Activated CD8-positive, alpha-beta T cell treated with anti-CD3 and anti-CD28 coated beads, Interleukin-2, amount 10 ng/mL, durations not matched to agents 7 days and 5 days (primary cell): ENCODE measurements at regions of chr20 and their contacts with region 1.

Region 1: DNA sequence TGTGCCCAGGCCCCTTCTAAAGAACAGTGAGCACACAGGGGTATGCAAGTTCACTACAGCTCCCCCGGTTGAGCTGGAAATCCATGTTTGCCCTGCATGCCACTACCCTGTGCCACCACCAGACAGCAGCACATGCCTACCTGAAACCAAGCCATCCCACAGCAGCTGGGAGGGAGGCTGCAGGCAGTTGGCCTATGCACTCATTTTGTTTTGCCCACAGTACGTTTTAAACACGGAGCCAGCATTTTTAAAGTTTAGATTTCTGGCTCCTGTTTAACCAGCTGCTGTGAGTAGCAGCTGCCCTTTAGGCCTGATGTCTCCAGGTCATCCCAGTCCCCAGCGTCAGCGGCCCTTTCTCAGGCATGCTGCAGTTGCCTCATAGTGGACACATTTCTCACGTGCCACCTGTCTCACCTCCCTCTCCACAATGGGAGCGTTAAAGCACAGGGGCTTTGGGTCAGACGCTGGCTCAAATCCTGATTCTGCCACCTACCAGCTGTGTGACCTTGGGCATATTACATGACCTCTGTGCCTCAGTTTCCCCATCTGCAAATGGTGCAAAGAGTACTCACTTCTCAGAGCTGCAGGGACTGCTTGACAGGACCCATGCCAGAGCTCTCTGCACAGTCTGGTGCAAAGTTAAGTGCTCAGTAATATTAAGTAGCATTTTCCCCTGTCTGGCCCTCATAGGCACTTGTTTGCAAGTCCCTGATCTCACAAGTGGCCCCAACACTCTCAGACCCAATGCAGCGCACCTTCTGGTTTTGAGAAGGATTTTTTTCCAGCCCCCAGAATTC is 8.1 kb upstream of the UBE2V1 start:
- DNase-seq: peak; percentile 70
- ATAC-seq: peak; percentile 68
- H3K4me3 Mint-ChIP-seq: no peak overlapping the region
- H3K27ac Mint-ChIP-seq: no peak overlapping the region
- H3K4me1 Mint-ChIP-seq: peaks cover 7% of the 10 kb centered on the region
- H3K27me3 Mint-ChIP-seq: no peaks in the 10 kb centered on the region

Region 2: DNA sequence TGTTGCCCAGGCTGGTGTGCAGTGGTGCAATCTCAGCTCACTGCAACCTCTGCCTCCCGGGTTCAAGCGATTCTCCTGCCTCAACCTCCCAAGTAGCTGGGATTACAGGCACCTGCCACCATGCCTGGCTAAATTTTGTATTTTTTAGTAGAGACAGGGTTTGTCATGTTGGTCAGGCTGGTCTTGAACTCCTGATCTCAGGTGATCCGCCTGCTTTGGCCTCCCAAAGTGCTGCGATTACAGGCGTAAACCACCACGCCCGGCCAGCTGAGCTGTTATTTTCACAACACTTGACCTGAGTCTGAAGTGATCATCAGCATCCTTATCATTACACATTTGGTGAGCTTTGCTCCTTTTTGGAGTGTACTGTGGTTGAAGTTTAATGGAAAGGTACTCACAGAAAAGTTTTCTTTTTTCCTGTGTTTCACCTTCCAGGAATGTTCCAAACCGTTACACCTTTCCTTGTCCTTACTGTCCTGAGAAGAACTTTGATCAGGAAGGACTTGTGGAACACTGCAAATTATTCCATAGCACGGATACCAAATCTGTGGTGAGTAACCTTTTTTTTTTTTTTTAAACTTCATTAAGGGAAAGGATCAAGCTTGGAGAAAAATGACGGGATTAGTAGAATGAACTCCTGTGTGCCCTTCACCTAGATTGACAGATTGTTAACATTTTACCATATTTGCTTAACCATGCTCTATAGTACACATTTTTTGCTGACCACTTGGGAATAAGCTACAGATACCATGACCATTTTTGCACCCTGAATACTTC is 175.2 kb before region 1 on chr20:
- CTCF ChIA-PET with region 1: no interaction called
- POLR2A ChIA-PET with region 1: no interaction called
- DNase-seq: no peak
- ATAC-seq: no peak
- H3K4me3 Mint-ChIP-seq: no peak overlapping the region
- H3K27ac Mint-ChIP-seq: no peak overlapping the region
- H3K4me1 Mint-ChIP-seq: peaks cover 12% of the 10 kb centered on the region
- H3K27me3 Mint-ChIP-seq: no peaks in the 10 kb centered on the region

Region 3: DNA sequence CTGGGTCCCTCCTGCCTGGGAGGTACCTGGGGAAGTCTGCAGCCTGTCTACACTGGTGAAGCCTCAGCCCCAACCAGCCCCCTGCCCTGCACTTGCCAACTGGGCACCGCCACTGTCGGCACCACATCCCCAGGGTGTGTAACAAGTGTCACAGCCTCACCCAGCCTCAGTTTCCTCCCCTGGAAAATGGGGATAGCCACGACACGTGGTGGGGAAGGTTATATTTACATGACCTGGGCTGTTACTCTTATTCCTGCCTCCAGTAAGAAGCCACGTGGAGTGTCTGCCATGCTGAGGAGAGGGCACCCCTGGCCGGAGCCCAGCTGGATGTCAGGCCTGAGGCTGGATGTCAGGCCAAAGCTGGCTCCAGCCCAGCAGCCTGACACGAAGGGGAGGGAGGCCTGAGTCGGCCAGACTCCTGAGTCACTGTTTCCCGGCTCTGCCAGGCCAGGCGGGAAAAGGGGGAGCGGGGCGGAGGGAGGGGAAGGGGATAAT is 93.4 kb before region 1 on chr20:
- CTCF ChIA-PET with region 1: no interaction called
- POLR2A ChIA-PET with region 1: no interaction called
- DNase-seq: no peak
- ATAC-seq: no peak
- H3K4me3 Mint-ChIP-seq: no peak overlapping the region
- H3K27ac Mint-ChIP-seq: no peak overlapping the region
- H3K4me1 Mint-ChIP-seq: no peaks in the 10 kb centered on the region
- H3K27me3 Mint-ChIP-seq: peaks cover 4% of the 10 kb centered on the region

Region 4: GRCh38 chr20:50093240-50093639 is 27.9 kb before region 1 on chr20:
- CTCF ChIA-PET with region 1: no interaction called
- POLR2A ChIA-PET with region 1: no interaction called
- DNase-seq: no peak
- ATAC-seq: no peak
- H3K4me3 Mint-ChIP-seq: no peak overlapping the region
- H3K27ac Mint-ChIP-seq: no peak overlapping the region
- H3K4me1 Mint-ChIP-seq: peaks cover 16% of the 10 kb centered on the region
- H3K27me3 Mint-ChIP-seq: no peaks in the 10 kb centered on the region

Region 5: GRCh38 chr20:50146732-50147662 is 25.9 kb after region 1 on chr20:
- CTCF ChIA-PET with region 1: interaction called, 56 read pairs
- POLR2A ChIA-PET with region 1: interaction called, 22 read pairs
- DNase-seq: peak; percentile 86
- ATAC-seq: peak; percentile 99
- H3K4me3 Mint-ChIP-seq: peak overlapping the region; percentile 78
- H3K27ac Mint-ChIP-seq: peak overlapping the region; percentile 98
- H3K4me1 Mint-ChIP-seq: peaks cover 68% of the 10 kb centered on the region
- H3K27me3 Mint-ChIP-seq: no peaks in the 10 kb centered on the region

Region 6: GRCh38 chr20:50153485-50154377 is 32.6 kb after region 1 on chr20 and contains the start of gene PEDS1:
- CTCF ChIA-PET with region 1: interaction called, 56 read pairs
- POLR2A ChIA-PET with region 1: interaction called, 22 read pairs
- DNase-seq: peak; percentile 87
- ATAC-seq: peak; percentile 99
- H3K4me3 Mint-ChIP-seq: peak within 1 kb of the TSS; percentile 78
- H3K27ac Mint-ChIP-seq: peak within 1 kb of the TSS; percentile 84
- H3K4me1 Mint-ChIP-seq: peaks cover 43% of the 10 kb centered on the region
- H3K27me3 Mint-ChIP-seq: no peaks in the 10 kb centered on the region
- total RNA-seq, gene PEDS1: 28.7 to 30.2 TPM

Region 7: DNA sequence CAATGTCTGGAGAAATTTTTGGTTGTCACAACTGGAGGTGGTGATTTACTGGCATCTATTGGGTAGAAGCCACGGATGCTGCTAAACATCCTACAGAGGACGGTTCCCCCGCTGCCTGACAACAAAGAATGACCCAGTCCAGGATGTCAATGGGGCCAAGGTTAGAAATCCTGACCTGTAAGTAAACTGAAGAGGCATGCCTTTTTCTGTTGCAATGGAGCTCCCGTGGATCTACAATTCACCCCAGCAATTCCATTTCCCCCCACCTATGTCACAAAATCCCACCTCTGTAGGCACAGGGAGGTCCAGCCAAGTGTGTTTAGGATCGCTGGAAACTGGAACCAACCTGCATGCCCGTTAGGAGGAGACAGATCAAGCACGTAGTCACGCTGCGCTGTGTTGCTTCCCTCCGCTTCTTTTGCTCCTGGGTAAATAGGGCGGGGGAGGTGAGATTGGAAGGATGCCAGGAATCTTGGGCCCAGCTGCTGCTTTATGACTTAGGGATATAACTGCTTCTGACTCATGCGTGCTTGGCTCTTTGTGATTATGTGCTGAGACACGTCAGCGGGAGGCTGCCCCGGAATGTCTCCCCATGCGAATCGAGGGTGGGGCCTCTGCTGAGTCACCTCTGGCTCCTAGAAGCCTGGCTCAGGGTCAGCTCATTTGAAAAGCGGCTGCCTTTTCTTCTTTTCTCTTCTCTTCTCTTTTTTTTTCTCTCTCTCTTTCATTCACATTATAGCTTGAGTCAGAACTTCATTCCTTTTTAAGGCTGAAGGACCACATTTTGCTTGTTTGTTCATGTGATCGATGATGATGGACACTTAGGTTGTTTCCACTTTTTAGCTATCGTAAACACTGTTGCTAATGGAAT is 44.8 kb after region 1 on chr20:
- CTCF ChIA-PET with region 1: interaction called, 128 read pairs
- POLR2A ChIA-PET with region 1: interaction called, 4 read pairs
- DNase-seq: peak; percentile 79
- ATAC-seq: peak; percentile 95
- H3K4me3 Mint-ChIP-seq: peak overlapping the region; percentile 69
- H3K27ac Mint-ChIP-seq: peak overlapping the region; percentile 80
- H3K4me1 Mint-ChIP-seq: peaks cover 14% of the 10 kb centered on the region
- H3K27me3 Mint-ChIP-seq: peaks cover 2% of the 10 kb centered on the region

Region 8: GRCh38 chr20:50172347-50173013 is 51.4 kb after region 1 on chr20:
- CTCF ChIA-PET with region 1: interaction called, 128 read pairs
- POLR2A ChIA-PET with region 1: interaction called, 4 read pairs
- DNase-seq: no peak
- ATAC-seq: peak; percentile 52
- H3K4me3 Mint-ChIP-seq: no peak overlapping the region
- H3K27ac Mint-ChIP-seq: no peak overlapping the region
- H3K4me1 Mint-ChIP-seq: peaks cover 13% of the 10 kb centered on the region
- H3K27me3 Mint-ChIP-seq: peaks cover 13% of the 10 kb centered on the region

Region 9: GRCh38 chr20:50179507-50180016 is 58.5 kb after region 1 on chr20:
- CTCF ChIA-PET with region 1: interaction called, 37 read pairs
- POLR2A ChIA-PET with region 1: no interaction called
- DNase-seq: no peak
- ATAC-seq: no peak
- H3K4me3 Mint-ChIP-seq: no peak overlapping the region
- H3K27ac Mint-ChIP-seq: no peak overlapping the region
- H3K4me1 Mint-ChIP-seq: no peaks in the 10 kb centered on the region
- H3K27me3 Mint-ChIP-seq: peaks cover 15% of the 10 kb centered on the region

Region 10: GRCh38 chr20:50224531-50225255 is 103.6 kb after region 1 on chr20:
- CTCF ChIA-PET with region 1: no interaction called
- POLR2A ChIA-PET with region 1: no interaction called
- DNase-seq: no peak
- ATAC-seq: no peak
- H3K4me3 Mint-ChIP-seq: no peak overlapping the region
- H3K27ac Mint-ChIP-seq: no peak overlapping the region
- H3K4me1 Mint-ChIP-seq: peaks cover 25% of the 10 kb centered on the region
- H3K27me3 Mint-ChIP-seq: no peaks in the 10 kb centered on the region